ENCODE measurements at regions of chr2 and their contacts with region 1.

Region 1: DNA sequence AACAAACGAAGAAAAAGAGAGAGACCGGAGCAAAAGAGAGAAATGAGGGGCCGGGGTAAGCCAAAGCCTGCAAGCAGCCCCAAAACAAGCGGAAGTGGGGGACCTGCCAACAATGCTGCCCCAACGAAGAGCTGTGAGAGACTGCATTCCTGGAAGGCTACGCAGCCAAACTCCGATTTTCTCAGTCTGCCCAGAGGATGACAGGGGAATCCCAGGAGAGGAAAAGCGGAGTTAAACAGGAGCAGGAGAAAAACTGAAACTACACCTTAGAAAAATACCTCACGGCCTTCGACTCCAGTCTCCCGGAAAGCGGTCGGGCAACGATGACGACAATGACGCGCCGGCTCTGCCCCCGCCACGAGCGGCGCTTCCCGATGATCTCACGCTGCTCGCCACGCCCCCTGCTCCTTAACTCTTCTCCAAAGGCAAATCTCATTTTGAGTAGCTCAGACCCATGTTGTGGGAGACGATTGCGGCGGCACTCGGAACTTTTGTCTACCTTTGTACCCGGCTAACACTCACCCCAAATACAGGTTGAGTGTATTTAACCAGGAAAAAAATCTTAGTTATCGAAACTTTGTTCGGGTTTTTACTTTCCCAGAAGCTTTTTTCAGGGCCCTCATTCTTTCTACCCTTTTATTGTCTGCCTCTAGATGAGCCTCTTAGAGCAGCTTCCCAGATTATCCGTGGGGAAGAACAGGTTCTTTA is at the start of gene C1D:
- DNase-seq: peak; percentile 90
- H3K4me3 Mint-ChIP-seq: peak within 1 kb of the TSS; percentile 93
- H3K27ac Mint-ChIP-seq: peak within 1 kb of the TSS; percentile 96
- H3K4me1 Mint-ChIP-seq: peaks cover 35% of the 10 kb centered on the region
- H3K27me3 Mint-ChIP-seq: peaks cover 10% of the 10 kb centered on the region
- total RNA-seq, gene C1D: 28.3 and 31.0 TPM in 2 replicates

Region 2: DNA sequence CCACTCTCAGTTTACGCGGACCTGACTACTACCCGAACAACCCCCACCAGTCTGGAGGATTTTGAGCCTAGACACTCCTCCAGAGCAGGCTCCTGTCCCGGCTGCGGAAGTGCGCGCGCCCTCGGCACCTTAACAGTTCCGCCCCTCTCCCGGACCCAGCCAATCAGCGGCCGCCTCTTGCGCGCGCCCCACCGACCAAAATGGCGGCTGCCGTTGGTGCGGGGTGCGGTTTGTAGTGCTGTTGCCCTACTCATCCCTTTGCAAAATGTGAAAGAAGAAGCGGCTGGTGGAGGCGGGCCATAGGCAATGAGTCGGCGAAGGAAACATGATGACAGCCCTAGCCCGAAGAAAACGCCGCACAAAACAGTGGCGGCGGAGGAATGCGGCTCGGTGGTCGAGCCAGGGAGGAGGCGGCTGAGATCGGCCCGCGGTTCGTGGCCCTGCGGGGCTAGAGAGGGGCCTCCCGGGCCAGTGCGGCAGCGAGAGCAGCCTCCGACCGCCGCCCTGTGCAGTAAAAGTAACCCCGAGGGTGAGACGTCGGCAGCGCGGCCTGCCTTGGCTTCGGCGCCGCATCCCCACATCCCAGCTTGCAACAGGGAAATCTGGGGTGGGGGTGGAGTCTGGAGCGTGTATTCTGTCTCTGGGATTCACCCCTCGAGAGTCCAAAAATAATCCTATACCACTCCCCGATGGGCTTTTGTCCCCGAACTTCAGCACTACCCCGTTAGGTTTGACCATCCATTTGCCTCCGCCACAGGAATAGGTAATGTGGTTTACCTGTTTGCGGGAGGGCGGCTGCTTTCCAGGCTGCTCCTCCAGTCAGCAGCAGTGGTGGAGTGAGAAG is 665.5 kb before region 1 on chr2 and contains the start of gene ETAA1:
- intact Hi-C with region 1: loop called (anchors 1 kb)
- DNase-seq: peak; percentile 90
- H3K4me3 Mint-ChIP-seq: peak within 1 kb of the TSS; percentile 97
- H3K27ac Mint-ChIP-seq: peak within 1 kb of the TSS; percentile 99
- H3K4me1 Mint-ChIP-seq: peaks cover 17% of the 10 kb centered on the region
- H3K27me3 Mint-ChIP-seq: peaks cover 2% of the 10 kb centered on the region
- total RNA-seq, gene ETAA1: 9.5 and 10.7 TPM in 2 replicates

Measured in activated T-helper 1 cell treated with anti-CD3 and anti-CD28 coated beads, Interleukin-12 subunit alpha, Interleukin-12 subunit beta, Interleukin-2, Interleukin-4 antibody, amounts not matched to agents 30 ng/mL and 10 ng/mL and 1 ng/mL, durations not matched to agents 14 hours and 24 hours and 36 hours (primary cell).